Esophagus muscularis mucosa (tissue), 4 donors: ENCODE measurements at regions of chr3 and their contacts with region 1.

Region 1: GRCh38 chr3:189148081-189148507 is 23.7 kb upstream of the TPRG1 start:
- DNase-seq: no peak
- H3K4me3 ChIP-seq: no peak overlapping the region
- H3K27ac ChIP-seq: no peak overlapping the region
- H3K4me1 ChIP-seq: peaks cover 0 to 8% (median 2%) of the 10 kb centered on the region in 4 donors
- H3K27me3 ChIP-seq: no peaks in the 10 kb centered on the region
- CTCF ChIP-seq: peak; percentile 78 to 85 (median 79)
- EP300 ChIP-seq: no peak
- POLR2A ChIP-seq: no peak

Region 2: GRCh38 chr3:187738331-187739093 is 1409.6 kb before region 1 on chr3:
- intact Hi-C with region 1: loop called (anchors 5 kb)
- DNase-seq: peak; percentile 98
- H3K4me3 ChIP-seq: peak overlapping the region; percentile 69 to 81 (median 76)
- H3K27ac ChIP-seq: peak overlapping the region; percentile 94 to 99 (median 98)
- H3K4me1 ChIP-seq: peaks cover 22 to 90% (median 52%) of the 10 kb centered on the region in 4 donors
- H3K27me3 ChIP-seq: no peaks in the 10 kb centered on the region
- CTCF ChIP-seq: peak; percentile 68 to 85 (median 76)
- EP300 ChIP-seq: peak; percentile 24
- POLR2A ChIP-seq: peak; percentile 40

Region 3: DNA sequence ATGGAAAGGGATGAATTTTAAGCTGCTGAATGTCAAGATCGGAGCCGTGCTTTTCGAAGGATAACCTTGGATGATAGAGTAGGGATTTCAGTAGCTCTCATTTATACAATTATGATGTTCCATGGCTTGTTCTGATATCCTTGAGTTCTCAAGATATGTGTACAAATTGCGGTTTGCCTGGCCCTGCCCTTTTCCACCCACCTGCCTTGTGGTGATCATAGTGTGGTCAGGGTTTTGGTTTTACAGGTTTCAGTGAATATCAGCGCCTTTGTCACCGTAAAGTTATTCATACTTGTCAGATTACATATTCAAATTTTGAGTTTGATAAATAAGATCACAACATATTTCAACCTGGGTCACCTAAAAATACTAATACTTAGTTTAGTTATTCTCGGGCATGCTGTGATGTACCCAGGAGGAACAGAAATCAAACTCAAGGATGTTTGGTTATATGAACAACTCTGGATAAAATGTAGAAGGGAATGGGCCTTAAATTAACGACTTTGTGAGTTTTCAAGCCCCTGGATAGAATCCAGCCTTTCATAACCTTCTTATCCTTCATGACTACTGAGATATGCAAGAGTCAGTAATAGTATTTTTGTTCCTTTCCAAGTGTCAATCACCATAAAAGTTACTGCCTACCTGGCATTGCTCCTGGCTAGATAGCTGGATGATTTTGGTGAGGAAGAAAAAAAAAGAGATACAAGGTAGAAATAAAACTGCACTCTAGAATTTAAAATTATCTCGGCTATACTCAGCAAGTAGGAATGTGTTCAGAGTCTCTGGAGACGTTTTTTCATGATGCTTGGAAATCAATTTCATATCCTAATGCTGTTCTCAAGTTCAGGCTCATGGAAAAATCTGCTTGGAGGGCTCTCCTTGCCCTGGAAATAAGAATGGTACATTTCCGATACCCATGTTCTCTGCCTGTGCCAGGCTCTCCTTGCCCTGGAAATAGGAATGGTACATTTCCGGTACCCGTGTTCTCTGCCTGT is 185.5 kb before region 1 on chr3:
- intact Hi-C with region 1: loop called (anchors 5 kb)
- DNase-seq: no peak
- H3K4me3 ChIP-seq: no peak overlapping the region
- H3K27ac ChIP-seq: no peak overlapping the region
- H3K4me1 ChIP-seq: no peaks in the 10 kb centered on the region
- H3K27me3 ChIP-seq: no peaks in the 10 kb centered on the region
- CTCF ChIP-seq: no peak
- EP300 ChIP-seq: no peak
- POLR2A ChIP-seq: no peak

Region 4: DNA sequence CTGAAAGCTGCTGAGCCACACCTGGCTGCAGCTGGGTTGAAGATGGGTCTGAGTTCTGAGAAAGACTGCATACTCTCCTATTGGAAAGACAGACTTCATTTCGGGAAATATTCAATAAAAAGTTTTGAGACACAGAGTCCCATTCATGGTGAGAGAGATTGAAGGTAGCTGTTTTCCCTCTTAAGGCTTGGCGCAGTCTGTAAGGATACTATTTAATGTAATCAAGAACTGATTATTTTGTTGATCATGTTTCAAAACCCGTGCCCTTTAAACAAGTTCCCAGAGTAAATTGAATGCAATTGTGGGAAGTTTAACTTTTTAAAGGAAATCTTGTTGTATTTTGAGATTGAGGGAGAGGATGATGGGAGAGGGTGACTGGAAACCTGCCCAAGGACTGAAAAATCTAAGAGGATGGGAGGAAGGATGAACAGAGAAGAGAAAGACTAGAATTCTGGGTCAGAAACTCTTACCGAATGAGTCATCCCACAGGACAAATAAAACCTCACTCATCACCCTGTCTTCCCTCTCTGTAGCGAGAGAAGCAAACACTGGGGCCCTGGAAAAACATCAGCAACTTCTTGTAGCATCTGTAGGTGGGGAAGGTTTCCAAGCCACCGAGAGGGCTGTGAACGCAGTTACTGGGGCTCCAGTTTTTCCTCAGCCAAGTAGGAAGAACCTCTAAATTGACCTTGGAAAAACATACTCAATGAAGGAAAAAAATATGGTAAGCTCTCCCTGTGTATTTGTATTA is 169.5 kb before region 1 on chr3:
- intact Hi-C with region 1: loop called (anchors 5 kb)
- DNase-seq: no peak
- H3K4me3 ChIP-seq: peak overlapping the region in 1 of 4 donors; percentile 5
- H3K27ac ChIP-seq: peak overlapping the region in 3 of 4 donors; percentile 24 to 50 (median 47)
- H3K4me1 ChIP-seq: peaks cover 0 to 22% (median 20%) of the 10 kb centered on the region in 4 donors
- H3K27me3 ChIP-seq: no peaks in the 10 kb centered on the region
- CTCF ChIP-seq: no peak
- EP300 ChIP-seq: no peak
- POLR2A ChIP-seq: no peak